Activated CD4-positive, alpha-beta T cell treated with anti-CD3 and anti-CD28 coated beads for 36 hours (primary cell): ENCODE measurements at regions of chr18 and their contacts with region 1.

Region 1: DNA sequence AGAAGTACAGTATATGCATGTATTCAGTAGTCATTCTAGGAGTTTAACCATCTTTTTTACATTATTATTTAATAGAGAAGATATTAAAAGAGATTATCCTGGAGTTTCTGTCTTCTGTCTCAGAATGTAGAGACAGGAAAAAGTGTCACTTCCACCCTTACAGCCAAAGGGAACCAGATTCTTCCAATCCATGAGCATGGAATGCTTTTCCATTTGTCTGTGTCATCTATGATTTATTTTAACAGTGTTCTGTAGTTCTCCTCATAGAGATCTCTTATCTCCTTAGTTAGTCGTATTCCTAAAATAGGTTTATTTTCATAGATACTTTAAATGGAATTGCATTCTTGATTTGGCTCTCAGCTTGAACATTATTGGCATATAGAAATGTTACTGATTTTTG is 959.5 kb upstream of the PIK3C3 start:
- DNase-seq: no peak
- ATAC-seq: no peak
- H3K4me3 Mint-ChIP-seq: no peak overlapping the region
- H3K27ac Mint-ChIP-seq: no peak overlapping the region
- H3K4me1 Mint-ChIP-seq: no peaks in the 10 kb centered on the region
- H3K27me3 Mint-ChIP-seq: no peaks in the 10 kb centered on the region

Region 2: DNA sequence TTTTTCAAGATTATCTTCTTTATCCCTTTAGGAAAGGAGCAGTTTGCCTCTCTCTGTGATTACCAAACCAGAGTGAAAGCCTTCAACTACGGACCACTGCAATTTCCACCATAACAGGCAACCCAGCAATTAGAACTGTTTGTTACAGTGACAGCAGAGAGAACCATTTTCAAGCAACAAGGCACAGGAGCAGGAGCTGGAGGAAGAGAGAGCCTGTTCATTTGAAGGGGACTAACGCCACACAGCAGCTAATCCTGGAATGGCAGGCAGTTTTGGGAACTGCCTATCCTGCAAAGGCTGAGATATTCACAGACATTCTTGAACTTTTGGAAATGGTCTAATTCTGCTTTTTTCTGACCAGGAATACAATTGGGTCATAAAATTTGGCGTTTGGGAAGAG is 582.4 kb before region 1 on chr18:
- CTCF ChIA-PET with region 1: no interaction called
- POLR2A ChIA-PET with region 1: no interaction called
- intact Hi-C with region 1: no loop called
- DNase-seq: no peak
- ATAC-seq: no peak
- H3K4me3 Mint-ChIP-seq: no peak overlapping the region
- H3K27ac Mint-ChIP-seq: no peak overlapping the region
- H3K4me1 Mint-ChIP-seq: no peaks in the 10 kb centered on the region
- H3K27me3 Mint-ChIP-seq: no peaks in the 10 kb centered on the region

Region 3: GRCh38 chr18:41058351-41059125 is 63.0 kb after region 1 on chr18:
- CTCF ChIA-PET with region 1: no interaction called
- POLR2A ChIA-PET with region 1: no interaction called
- intact Hi-C with region 1: loop called in 1 of 2 experiments (anchors 10 kb)
- DNase-seq: no peak
- ATAC-seq: no peak
- H3K4me3 Mint-ChIP-seq: no peak overlapping the region
- H3K27ac Mint-ChIP-seq: no peak overlapping the region
- H3K4me1 Mint-ChIP-seq: no peaks in the 10 kb centered on the region
- H3K27me3 Mint-ChIP-seq: no peaks in the 10 kb centered on the region